ENCODE measurements at regions of chr15 and their contacts with region 1.

Region 1: GRCh38 chr15:100020189-100020588 is 287.0 kb upstream of the LYSMD4 start:
- DNase-seq: no peak
- ATAC-seq: no peak
- H3K4me3 ChIP-seq: no peak overlapping the region
- H3K4me3 Mint-ChIP-seq: no peak overlapping the region
- H3K27ac ChIP-seq: no peak overlapping the region
- H3K27ac Mint-ChIP-seq: no peak overlapping the region
- H3K4me1 ChIP-seq: no peaks in the 10 kb centered on the region
- H3K4me1 Mint-ChIP-seq: no peaks in the 10 kb centered on the region
- H3K27me3 ChIP-seq: no peaks in the 10 kb centered on the region
- H3K27me3 Mint-ChIP-seq: no peaks in the 10 kb centered on the region
- CTCF ChIP-seq: no peak

Region 2: DNA sequence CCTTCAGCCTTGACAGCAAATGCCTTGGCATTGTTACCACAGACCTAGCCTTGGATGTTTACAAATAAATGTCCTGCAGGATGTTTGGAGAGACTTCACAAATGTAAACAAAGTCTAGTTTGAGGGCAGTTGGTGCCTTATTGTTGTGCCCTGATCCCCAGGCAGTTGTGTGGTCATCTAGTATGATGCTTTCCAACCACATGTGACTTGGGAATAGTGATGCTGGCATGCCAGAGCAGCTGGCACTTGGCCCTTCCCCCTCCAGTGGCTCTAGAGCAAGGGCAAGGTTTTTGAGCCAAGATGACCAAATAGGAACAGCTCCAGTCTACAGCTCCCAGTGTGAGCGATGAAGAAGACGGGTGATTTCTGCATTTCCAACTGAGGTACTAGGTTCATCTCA is 63.4 kb after region 1 on chr15:
- CTCF ChIA-PET with region 1: no interaction called
- POLR2A ChIA-PET with region 1: no interaction called
- intact Hi-C with region 1: loop called in 1 of 2 experiments (anchors 10 kb)
- DNase-seq: no peak
- ATAC-seq: no peak
- H3K4me3 ChIP-seq: no peak overlapping the region
- H3K4me3 Mint-ChIP-seq: no peak overlapping the region
- H3K27ac ChIP-seq: no peak overlapping the region
- H3K27ac Mint-ChIP-seq: no peak overlapping the region
- H3K4me1 ChIP-seq: no peaks in the 10 kb centered on the region
- H3K4me1 Mint-ChIP-seq: no peaks in the 10 kb centered on the region
- H3K27me3 ChIP-seq: no peaks in the 10 kb centered on the region
- H3K27me3 Mint-ChIP-seq: no peaks in the 10 kb centered on the region
- CTCF ChIP-seq: no peak